CD4-positive, alpha-beta memory T cell (primary cell): ENCODE measurements at regions of chr3 and their contacts with region 1.

Region 1: DNA sequence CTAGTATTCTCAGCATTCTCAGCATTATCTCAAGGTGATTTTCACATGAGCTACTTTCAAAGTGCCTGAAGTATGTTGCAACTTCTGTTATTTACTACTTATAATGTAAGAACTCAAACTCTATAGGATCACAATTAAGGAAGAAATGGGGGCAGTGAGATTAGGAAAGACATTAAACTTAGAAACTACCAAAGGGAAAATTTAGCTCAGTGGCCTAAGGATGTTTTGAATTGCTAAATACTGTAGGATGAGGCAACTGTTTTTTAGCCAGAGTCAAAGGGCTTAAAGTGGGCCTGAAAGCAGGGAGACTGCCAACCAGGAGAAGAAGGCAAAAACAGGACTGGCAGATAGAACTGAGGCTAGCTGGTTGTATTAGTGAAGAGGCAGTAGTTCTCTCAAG is 55.5 kb upstream of the MBNL1 start:
- DNase-seq: no peak
- H3K4me3 ChIP-seq: no peak overlapping the region
- H3K4me3 Mint-ChIP-seq: peak overlapping the region in 2 of 8 donors; percentile 13 to 33
- H3K27ac ChIP-seq: no peak overlapping the region
- H3K27ac Mint-ChIP-seq: peak overlapping the region; percentile 1 to 80 (median 18)
- H3K4me1 ChIP-seq: peaks cover 50% of the 10 kb centered on the region
- H3K4me1 Mint-ChIP-seq: peaks cover 45 to 65% (median 56%) of the 10 kb centered on the region in 4 donors
- H3K27me3 ChIP-seq: no peaks in the 10 kb centered on the region
- H3K27me3 Mint-ChIP-seq: no peaks in the 10 kb centered on the region

Region 2: DNA sequence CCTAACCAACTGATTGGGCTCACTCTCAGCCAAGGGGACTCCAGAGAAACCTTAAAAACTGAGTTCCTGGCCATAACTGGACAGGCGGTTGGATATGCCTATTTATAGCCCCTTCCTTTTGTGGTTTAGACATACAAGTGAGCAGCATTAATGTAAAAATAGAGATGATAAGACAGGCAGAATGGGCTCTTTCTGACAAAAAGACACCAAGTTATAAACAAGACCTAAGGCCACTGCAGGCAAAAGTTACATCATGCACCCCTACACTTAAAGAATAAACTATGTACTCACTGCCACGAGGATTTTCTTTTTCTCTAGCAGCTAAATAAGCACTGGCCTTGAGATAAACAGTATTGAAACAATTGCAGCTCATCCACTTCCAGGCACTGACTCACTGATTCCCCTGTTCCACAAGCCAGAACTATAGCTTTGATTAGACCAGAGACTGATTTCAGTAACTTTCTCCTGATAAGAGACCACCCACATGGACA is 309.7 kb before region 1 on chr3:
- CTCF ChIA-PET with region 1: no interaction called
- POLR2A ChIA-PET with region 1: no interaction called
- intact Hi-C with region 1: no loop called
- DNase-seq: no peak
- H3K4me3 ChIP-seq: no peak overlapping the region
- H3K4me3 Mint-ChIP-seq: no peak overlapping the region
- H3K27ac ChIP-seq: no peak overlapping the region
- H3K27ac Mint-ChIP-seq: no peak overlapping the region
- H3K4me1 ChIP-seq: no peaks in the 10 kb centered on the region
- H3K4me1 Mint-ChIP-seq: peaks cover 14 to 24% (median 20%) of the 10 kb centered on the region in 4 donors
- H3K27me3 ChIP-seq: no peaks in the 10 kb centered on the region
- H3K27me3 Mint-ChIP-seq: no peaks in the 10 kb centered on the region

Region 3: DNA sequence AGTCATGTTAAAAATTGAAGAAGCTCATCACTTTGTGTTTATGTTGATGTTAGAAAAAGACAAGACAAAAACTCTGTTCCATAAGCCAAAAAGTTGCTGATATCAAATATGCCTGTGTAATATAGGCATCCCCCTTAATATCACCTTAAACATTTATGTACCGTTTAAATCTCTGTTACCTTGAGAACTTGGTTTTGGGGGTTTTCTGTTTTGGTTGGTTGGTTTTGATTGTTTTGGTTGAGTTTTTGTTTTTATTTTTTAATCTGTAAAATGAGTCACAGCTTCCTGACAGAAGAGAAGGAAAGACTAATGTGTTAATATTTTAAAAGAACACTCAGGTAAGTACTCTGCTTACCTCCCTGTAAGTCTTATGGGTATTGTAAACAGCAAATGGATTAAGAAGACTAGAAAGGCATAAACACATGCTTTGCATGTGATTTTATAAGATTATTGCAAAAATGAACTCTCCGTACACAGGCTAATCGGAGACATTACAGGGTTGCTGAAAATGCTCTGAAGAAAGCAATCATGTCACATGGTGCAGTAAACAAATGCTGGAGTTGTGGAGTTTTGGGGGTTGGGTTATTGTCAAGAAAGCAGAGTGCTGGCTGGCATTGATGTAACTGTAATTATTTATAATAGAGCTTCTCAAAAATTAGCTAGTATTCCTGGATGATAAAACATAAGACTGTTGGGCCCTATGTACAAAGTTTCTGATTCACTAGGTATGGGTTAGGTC is 13.9 kb before region 1 on chr3:
- CTCF ChIA-PET with region 1: interaction called, 4 read pairs
- POLR2A ChIA-PET with region 1: interaction called, 23 read pairs
- intact Hi-C with region 1: loop called (anchors 2 kb)
- DNase-seq: peak in 1 of 5 donors; percentile 33
- H3K4me3 ChIP-seq: peak overlapping the region; percentile 35 to 55
- H3K4me3 Mint-ChIP-seq: peak overlapping the region; percentile 74 to 93 (median 80)
- H3K27ac ChIP-seq: peak overlapping the region; percentile 84
- H3K27ac Mint-ChIP-seq: peak overlapping the region; percentile 90 to 99 (median 94)
- H3K4me1 ChIP-seq: peaks cover 85% of the 10 kb centered on the region
- H3K4me1 Mint-ChIP-seq: peaks cover 47 to 79% (median 64%) of the 10 kb centered on the region in 4 donors
- H3K27me3 ChIP-seq: no peaks in the 10 kb centered on the region
- H3K27me3 Mint-ChIP-seq: no peaks in the 10 kb centered on the region

Region 4: GRCh38 chr3:152322756-152323155 is 109.6 kb after region 1 on chr3:
- CTCF ChIA-PET with region 1: no interaction called
- POLR2A ChIA-PET with region 1: no interaction called
- intact Hi-C with region 1: no loop called
- DNase-seq: no peak
- H3K4me3 ChIP-seq: no peak overlapping the region
- H3K4me3 Mint-ChIP-seq: peak overlapping the region; percentile 11 to 74 (median 68)
- H3K27ac ChIP-seq: peak overlapping the region; percentile 52
- H3K27ac Mint-ChIP-seq: peak overlapping the region; percentile 44 to 93 (median 79)
- H3K4me1 ChIP-seq: peaks cover 95% of the 10 kb centered on the region
- H3K4me1 Mint-ChIP-seq: peaks cover 62 to 90% (median 73%) of the 10 kb centered on the region in 4 donors
- H3K27me3 ChIP-seq: no peaks in the 10 kb centered on the region
- H3K27me3 Mint-ChIP-seq: no peaks in the 10 kb centered on the region